ENCODE measurements at regions of chr2 and their contacts with region 1.

Region 1: GRCh38 chr2:79860228-79861058 is 347.6 kb downstream of the CTNNA2 start:
- DNase-seq: no peak
- H3K4me3 ChIP-seq: no peak overlapping the region
- H3K27ac ChIP-seq: no peak overlapping the region
- H3K4me1 ChIP-seq: peaks cover under 1 to 6% (median 2%) of the 10 kb centered on the region in 4 experiments; a peak in 5 of 7 replicates
- H3K27me3 ChIP-seq: no peaks in the 10 kb centered on the region
- CTCF ChIP-seq: peak in 2 of 3 experiments; percentile 75 to 95; a peak in 3 of 4 replicates
- EP300 ChIP-seq: no peak
- POLR2A ChIP-seq: no peak
- RAD21 ChIP-seq: peak; percentile 92 to 94

Region 2: DNA sequence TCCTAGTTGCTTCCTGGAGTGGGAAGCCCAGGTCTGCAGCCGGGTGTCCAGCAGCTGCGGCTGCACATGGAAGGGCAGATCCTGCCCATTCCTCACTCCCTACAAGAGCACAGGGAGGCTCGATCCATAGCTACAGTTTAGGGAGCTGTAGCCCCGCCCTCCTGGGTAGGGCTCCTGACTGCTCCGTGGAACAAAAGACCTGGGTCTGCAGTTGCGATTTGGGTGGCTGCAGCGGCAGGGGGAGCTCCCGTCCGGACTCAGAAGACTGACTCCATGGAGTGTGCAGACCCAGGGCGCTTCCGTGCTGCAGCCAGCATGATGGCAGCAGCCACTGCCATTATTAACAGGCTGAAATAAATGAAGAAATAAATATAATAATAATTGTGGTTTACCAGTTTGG is 190.2 kb before region 1 on chr2:
- CTCF ChIA-PET with region 1: interaction called, 43 read pairs
- POLR2A ChIA-PET with region 1: no interaction called
- DNase-seq: peak; percentile 79 to 84
- H3K4me3 ChIP-seq: no peak overlapping the region
- H3K27ac ChIP-seq: no peak overlapping the region
- H3K4me1 ChIP-seq: peaks cover 0 to 4% (median 0%) of the 10 kb centered on the region in 4 experiments; a peak in 3 of 7 replicates
- H3K27me3 ChIP-seq: no peaks in the 10 kb centered on the region
- CTCF ChIP-seq: peak; percentile 46 to 64 (median 61)
- EP300 ChIP-seq: no peak
- POLR2A ChIP-seq: no peak
- RAD21 ChIP-seq: peak; percentile 69 to 77

Region 3: DNA sequence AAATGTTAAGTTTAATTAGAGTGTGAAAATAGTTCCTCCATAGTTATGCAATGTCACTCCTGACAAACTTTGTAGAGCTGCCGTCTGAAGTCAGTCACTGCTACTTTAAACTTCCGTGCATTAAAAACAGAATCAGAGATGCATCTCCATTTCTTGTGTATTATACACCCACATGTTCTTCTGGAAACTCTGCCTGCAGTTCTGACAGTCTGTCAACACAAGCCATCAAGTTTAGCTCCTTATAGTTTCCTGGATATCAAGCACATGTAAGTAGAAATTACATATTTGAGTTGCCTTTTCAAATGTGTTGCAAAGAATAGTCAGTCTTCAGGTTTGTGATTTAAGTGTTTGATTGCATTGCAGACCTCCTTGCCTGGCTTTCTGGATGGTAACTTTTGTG is 163.2 kb before region 1 on chr2:
- CTCF ChIA-PET with region 1: no interaction called
- POLR2A ChIA-PET with region 1: no interaction called
- DNase-seq: no peak
- H3K4me3 ChIP-seq: no peak overlapping the region
- H3K27ac ChIP-seq: no peak overlapping the region
- H3K4me1 ChIP-seq: no peaks in the 10 kb centered on the region
- H3K27me3 ChIP-seq: no peaks in the 10 kb centered on the region
- CTCF ChIP-seq: no peak
- EP300 ChIP-seq: no peak
- POLR2A ChIP-seq: no peak
- RAD21 ChIP-seq: no peak

Region 4: DNA sequence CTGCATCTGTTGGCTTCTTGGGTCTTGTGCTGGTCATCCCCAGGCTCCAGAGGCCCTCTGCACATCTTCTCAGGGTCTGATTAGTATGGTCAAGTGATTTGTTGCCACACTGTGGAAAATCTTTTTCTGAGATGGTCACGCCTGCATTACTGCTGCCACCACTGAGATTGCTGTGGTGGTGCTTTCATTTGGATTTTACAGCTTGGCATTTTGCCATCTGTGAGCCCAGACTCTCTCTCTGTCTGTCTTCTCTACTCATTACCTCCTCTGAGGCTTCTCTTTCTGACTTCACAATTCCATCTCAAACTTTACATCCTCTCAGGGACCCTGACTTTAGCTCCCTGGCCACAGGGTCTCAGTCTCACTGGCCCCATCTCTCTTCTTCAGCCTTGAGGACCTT is 289.5 kb after region 1 on chr2:
- CTCF ChIA-PET with region 1: no interaction called
- POLR2A ChIA-PET with region 1: no interaction called
- DNase-seq: no peak
- H3K4me3 ChIP-seq: no peak overlapping the region
- H3K27ac ChIP-seq: no peak overlapping the region
- H3K4me1 ChIP-seq: no peaks in the 10 kb centered on the region; a peak in 1 of 7 replicates
- H3K27me3 ChIP-seq: no peaks in the 10 kb centered on the region
- CTCF ChIP-seq: no peak
- EP300 ChIP-seq: no peak
- POLR2A ChIP-seq: no peak
- RAD21 ChIP-seq: no peak